Naive thymus-derived CD4-positive, alpha-beta T cell (primary cell): ENCODE measurements at regions of chr6 and their contacts with region 1.

Region 1: DNA sequence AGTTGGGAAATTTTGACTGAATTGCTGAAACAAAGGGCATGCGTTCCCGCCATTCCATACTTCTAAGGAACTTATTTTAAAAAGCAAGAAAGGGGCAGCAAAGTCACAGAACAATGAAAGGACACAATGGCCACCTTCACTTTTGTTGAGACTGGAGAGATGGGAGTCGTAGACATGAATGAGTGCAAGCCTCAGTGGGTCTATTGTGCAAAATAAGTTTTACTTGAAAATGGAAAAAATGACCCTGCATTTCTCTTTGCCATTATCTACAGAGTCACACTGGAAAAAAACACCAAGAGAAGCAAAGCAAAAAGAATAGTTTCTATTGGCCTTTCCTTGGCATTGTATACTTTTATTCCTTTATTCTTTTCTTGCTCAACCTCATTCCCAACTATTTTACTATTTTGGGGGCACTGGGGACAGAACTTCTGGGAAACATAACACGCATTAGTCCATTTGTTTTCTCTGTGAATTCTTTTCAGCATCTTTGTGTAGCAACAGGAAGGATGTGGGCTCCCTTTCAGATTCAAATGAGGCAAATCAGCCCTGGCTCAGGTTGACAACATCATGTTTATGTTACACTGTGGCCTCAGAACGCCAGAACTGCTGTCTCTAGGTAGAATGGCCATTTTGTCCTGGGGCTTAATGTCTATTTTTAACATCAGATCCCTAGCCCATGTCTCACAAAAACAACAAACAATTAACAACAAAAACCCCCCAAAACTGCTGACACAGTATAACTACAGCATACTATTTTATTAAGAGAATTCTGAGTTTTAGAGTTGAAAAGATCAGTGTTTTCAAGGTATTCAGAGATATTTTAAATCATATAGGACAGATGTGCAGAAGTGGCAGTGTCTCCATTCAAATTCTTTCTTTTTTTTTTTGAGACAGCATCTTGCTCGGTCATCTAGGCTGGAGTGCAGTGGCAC is 122.2 kb downstream of the FYN start:
- DNase-seq: peak in 7 of 9 donors; percentile 72 to 85 (median 81)
- ATAC-seq: peak; percentile 94
- H3K4me3 ChIP-seq: peak overlapping the region; percentile 41
- H3K4me3 Mint-ChIP-seq: peak overlapping the region; percentile 58 to 82 (median 73)
- H3K27ac ChIP-seq: peak overlapping the region; percentile 97
- H3K27ac Mint-ChIP-seq: peak overlapping the region; percentile 93 to 100 (median 98)
- H3K4me1 ChIP-seq: peaks cover 94 to 95% of the 10 kb centered on the region in 2 donors
- H3K4me1 Mint-ChIP-seq: peaks cover 67 to 100% (median 99%) of the 10 kb centered on the region in 7 donors
- H3K27me3 ChIP-seq: no peaks in the 10 kb centered on the region
- H3K27me3 Mint-ChIP-seq: no peaks in the 10 kb centered on the region

Region 2: DNA sequence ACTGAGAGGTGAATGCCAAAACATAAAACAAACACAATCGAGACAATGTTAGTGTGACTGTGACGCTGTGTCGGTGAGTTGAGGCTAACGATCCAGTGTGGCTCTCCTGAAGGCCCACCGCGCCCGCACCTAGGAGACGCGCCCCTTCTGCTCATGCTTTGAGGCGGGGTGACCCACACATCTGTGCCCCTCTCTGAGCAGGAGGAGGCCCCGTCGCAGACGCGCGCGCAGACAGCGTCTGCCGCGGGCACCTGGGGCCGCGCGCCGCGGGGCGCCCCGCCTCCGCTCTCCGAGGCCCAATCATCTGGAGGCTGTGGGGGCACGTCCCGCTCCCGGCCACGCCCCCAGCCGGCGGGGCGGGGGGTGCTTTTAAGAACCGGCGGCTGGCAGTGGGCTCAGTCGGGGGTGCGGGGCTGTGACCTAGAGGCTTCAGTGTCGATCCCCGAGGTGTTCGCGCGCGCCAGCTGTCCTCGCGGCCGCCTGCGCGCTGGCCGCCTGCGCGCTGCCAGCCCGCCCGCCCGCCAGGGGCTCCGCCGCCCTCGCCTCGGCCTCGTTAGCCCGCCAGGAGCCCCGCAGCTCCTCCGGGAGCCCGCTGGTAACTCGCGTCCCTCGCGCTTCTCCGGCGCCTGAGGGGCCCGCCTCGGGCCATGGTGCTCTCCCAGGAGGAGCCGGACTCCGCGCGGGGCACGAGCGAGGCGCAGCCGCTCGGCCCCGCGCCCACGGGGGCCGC is 663.7 kb before region 1 on chr6 and contains the start of gene SLC16A10:
- CTCF ChIA-PET with region 1: no interaction called
- POLR2A ChIA-PET with region 1: no interaction called
- intact Hi-C with region 1: loop called in 1 of 2 experiments (anchors 10 kb)
- DNase-seq: peak; percentile 75 to 92 (median 90)
- ATAC-seq: peak; percentile 95
- H3K4me3 ChIP-seq: peak within 1 kb of the TSS; percentile 83
- H3K4me3 Mint-ChIP-seq: peak within 1 kb of the TSS; percentile 85 to 100 (median 97)
- H3K27ac ChIP-seq: peak within 1 kb of the TSS; percentile 80
- H3K27ac Mint-ChIP-seq: peak within 1 kb of the TSS; percentile 54 to 99 (median 96)
- H3K4me1 ChIP-seq: peaks cover 10 to 17% of the 10 kb centered on the region in 2 donors
- H3K4me1 Mint-ChIP-seq: peaks cover 20 to 54% (median 48%) of the 10 kb centered on the region in 7 donors
- H3K27me3 ChIP-seq: no peaks in the 10 kb centered on the region
- H3K27me3 Mint-ChIP-seq: peaks cover 0 to 24% (median 0%) of the 10 kb centered on the region in 5 donors
- total RNA-seq, gene SLC16A10: 1.6 to 27.7 (median 16.7) TPM

Region 3: DNA sequence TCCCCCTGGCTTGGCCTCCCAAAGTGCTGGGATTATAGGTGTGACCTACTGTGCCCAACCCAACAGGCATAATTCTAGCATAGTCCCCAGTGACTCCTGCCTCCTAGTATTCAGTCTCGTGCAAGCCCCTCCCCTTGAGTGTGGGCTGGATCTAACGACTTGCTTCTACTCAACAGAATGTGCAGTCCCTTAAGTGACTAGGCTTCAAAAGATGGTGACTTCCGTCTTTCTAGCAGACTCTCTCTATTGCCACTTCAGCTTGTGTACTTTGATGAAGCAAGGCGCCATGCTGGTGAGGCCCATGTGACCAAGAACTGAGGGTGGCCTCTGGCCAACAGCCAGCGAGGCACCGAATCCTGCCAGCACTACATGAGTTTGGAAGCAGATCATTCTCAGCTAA is 35.7 kb before region 1 on chr6:
- CTCF ChIA-PET with region 1: interaction called, 13 read pairs
- POLR2A ChIA-PET with region 1: interaction called, 3 read pairs
- intact Hi-C with region 1: loop called (anchors 1 to 2 kb)
- DNase-seq: peak in 7 of 9 donors; percentile 39 to 72 (median 58)
- ATAC-seq: peak; percentile 83
- H3K4me3 ChIP-seq: no peak overlapping the region
- H3K4me3 Mint-ChIP-seq: peak overlapping the region; percentile 19 to 77 (median 66)
- H3K27ac ChIP-seq: peak overlapping the region; percentile 59
- H3K27ac Mint-ChIP-seq: peak overlapping the region; percentile 83 to 98 (median 93)
- H3K4me1 ChIP-seq: peaks cover 43 to 52% of the 10 kb centered on the region in 2 donors
- H3K4me1 Mint-ChIP-seq: peaks cover 36 to 88% (median 76%) of the 10 kb centered on the region in 7 donors
- H3K27me3 ChIP-seq: no peaks in the 10 kb centered on the region
- H3K27me3 Mint-ChIP-seq: no peaks in the 10 kb centered on the region

Region 4: GRCh38 chr6:111737065-111737521 is 13.9 kb before region 1 on chr6:
- CTCF ChIA-PET with region 1: interaction called, 8 read pairs
- POLR2A ChIA-PET with region 1: interaction called, 7 read pairs
- intact Hi-C with region 1: loop called (anchors 1 to 2 kb)
- DNase-seq: peak in 1 of 9 donors; percentile 41
- ATAC-seq: no peak
- H3K4me3 ChIP-seq: no peak overlapping the region
- H3K4me3 Mint-ChIP-seq: peak overlapping the region; percentile 10 to 69 (median 48)
- H3K27ac ChIP-seq: peak overlapping the region; percentile 38
- H3K27ac Mint-ChIP-seq: peak overlapping the region; percentile 21 to 99 (median 91)
- H3K4me1 ChIP-seq: peaks cover 63 to 82% of the 10 kb centered on the region in 2 donors
- H3K4me1 Mint-ChIP-seq: peaks cover 63 to 94% (median 90%) of the 10 kb centered on the region in 7 donors
- H3K27me3 ChIP-seq: no peaks in the 10 kb centered on the region
- H3K27me3 Mint-ChIP-seq: no peaks in the 10 kb centered on the region

Region 5: GRCh38 chr6:111793711-111794111 is 42.7 kb after region 1 on chr6:
- CTCF ChIA-PET with region 1: no interaction called
- POLR2A ChIA-PET with region 1: no interaction called
- intact Hi-C with region 1: loop called in 1 of 2 experiments (anchors 1 kb)
- DNase-seq: peak in 1 of 9 donors; percentile 32
- ATAC-seq: peak; percentile 83
- H3K4me3 ChIP-seq: peak overlapping the region; percentile 63
- H3K4me3 Mint-ChIP-seq: peak overlapping the region in 9 of 10 donors; percentile 51 to 79 (median 62)
- H3K27ac ChIP-seq: peak overlapping the region; percentile 53
- H3K27ac Mint-ChIP-seq: peak overlapping the region in 8 of 9 donors; percentile 46 to 91 (median 84)
- H3K4me1 ChIP-seq: peaks cover 68% of the 10 kb centered on the region in 2 donors
- H3K4me1 Mint-ChIP-seq: peaks cover 6 to 67% (median 9%) of the 10 kb centered on the region in 7 donors
- H3K27me3 ChIP-seq: no peaks in the 10 kb centered on the region
- H3K27me3 Mint-ChIP-seq: no peaks in the 10 kb centered on the region

Region 6: GRCh38 chr6:111841822-111842221 is 90.8 kb after region 1 on chr6:
- CTCF ChIA-PET with region 1: interaction called, 6 read pairs
- POLR2A ChIA-PET with region 1: no interaction called
- intact Hi-C with region 1: loop called in 1 of 2 experiments (anchors 2 kb)
- DNase-seq: peak in 7 of 9 donors; percentile 38 to 63 (median 61)
- ATAC-seq: no peak
- H3K4me3 ChIP-seq: no peak overlapping the region
- H3K4me3 Mint-ChIP-seq: no peak overlapping the region
- H3K27ac ChIP-seq: peak overlapping the region; percentile 62
- H3K27ac Mint-ChIP-seq: no peak overlapping the region
- H3K4me1 ChIP-seq: peaks cover 98 to 100% of the 10 kb centered on the region in 2 donors
- H3K4me1 Mint-ChIP-seq: peaks cover 0 to 55% (median 0%) of the 10 kb centered on the region in 7 donors
- H3K27me3 ChIP-seq: no peaks in the 10 kb centered on the region
- H3K27me3 Mint-ChIP-seq: no peaks in the 10 kb centered on the region